GM10248 (cell line): ENCODE measurements at regions of chr4 and their contacts with region 1.

Region 1: GRCh38 chr4:118872181-118872580 is 16.5 kb upstream of the SYNPO2 start:
- DNase-seq: no peak
- CTCF ChIP-seq: no peak

Region 2: GRCh38 chr4:118589471-118590055 is 282.6 kb before region 1 on chr4:
- CTCF ChIA-PET with region 1: no interaction called
- POLR2A ChIA-PET with region 1: no interaction called
- DNase-seq: no peak
- CTCF ChIP-seq: no peak

Region 3: DNA sequence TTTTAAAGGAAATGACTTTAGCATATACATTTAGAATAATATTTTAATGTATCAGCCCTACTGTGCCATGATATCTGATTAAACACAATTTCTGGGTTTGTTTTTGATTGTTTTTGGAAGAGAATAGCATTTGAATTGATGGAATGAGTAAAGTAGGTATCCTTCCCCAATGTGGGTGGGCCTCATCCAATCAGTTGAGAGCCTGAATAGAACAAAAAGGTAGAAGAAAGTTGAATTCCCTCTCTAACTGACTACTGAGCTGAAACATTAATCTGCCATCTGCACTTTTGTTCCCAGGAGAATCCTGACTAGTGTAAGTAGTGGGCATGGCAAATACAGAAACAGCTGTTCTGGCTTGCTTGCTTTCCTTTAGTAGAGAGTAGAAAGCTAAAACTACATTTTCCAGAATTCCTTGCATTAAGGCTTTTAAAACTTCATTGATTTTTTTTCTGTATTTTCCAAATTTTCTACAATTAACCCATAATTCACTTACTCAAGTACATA is 26.6 kb before region 1 on chr4:
- CTCF ChIA-PET with region 1: no interaction called
- POLR2A ChIA-PET with region 1: no interaction called
- DNase-seq: no peak
- CTCF ChIP-seq: no peak

Region 4: DNA sequence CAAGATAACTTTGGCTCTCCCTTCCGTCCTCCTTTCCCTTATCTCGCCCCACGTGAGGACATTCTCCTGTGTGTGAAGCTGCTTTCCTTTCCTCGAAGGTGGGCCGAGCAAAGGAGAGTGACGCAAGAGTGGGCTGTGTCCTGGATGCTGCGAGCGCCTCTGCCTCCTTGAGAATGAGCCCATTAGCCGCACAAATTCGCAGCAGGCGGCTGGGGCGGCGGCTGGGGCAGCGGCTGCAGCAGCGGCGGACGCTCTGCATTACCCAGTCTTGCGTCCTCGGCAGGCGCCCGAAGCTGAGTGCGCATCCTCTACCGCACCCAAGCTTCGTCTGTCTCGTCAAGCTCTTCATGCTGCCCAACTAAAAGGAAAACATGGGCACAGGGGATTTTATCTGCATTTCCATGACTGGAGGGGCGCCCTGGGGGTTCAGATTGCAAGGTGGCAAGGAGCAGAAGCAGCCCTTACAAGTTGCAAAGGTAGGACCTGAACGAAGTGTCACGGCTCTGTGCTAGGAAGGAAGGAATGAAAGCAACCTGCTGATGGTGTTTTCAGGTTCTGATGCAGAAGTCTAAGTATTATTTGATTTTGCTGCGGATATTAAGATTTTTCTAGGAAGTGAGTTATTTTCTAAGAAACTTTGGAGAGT is 16.6 kb after region 1 on chr4 and contains the start of gene SYNPO2:
- CTCF ChIA-PET with region 1: interaction called, 11 read pairs
- POLR2A ChIA-PET with region 1: no interaction called
- DNase-seq: peak; percentile 37
- CTCF ChIP-seq: no peak